Vagina (tissue), 2 donors: ENCODE measurements at regions of chr7 and their contacts with region 1.

Region 1: GRCh38 chr7:3897438-3898385 is 596.7 kb downstream of the SDK1 start:
- DNase-seq: no peak
- H3K4me3 ChIP-seq: no peak overlapping the region
- H3K27ac ChIP-seq: peak overlapping the region; percentile 18
- H3K4me1 ChIP-seq: no peaks in the 10 kb centered on the region
- H3K27me3 ChIP-seq: no peaks in the 10 kb centered on the region
- CTCF ChIP-seq: peak; percentile 18 to 72 (median 60)
- POLR2A ChIP-seq: no peak

Region 2: DNA sequence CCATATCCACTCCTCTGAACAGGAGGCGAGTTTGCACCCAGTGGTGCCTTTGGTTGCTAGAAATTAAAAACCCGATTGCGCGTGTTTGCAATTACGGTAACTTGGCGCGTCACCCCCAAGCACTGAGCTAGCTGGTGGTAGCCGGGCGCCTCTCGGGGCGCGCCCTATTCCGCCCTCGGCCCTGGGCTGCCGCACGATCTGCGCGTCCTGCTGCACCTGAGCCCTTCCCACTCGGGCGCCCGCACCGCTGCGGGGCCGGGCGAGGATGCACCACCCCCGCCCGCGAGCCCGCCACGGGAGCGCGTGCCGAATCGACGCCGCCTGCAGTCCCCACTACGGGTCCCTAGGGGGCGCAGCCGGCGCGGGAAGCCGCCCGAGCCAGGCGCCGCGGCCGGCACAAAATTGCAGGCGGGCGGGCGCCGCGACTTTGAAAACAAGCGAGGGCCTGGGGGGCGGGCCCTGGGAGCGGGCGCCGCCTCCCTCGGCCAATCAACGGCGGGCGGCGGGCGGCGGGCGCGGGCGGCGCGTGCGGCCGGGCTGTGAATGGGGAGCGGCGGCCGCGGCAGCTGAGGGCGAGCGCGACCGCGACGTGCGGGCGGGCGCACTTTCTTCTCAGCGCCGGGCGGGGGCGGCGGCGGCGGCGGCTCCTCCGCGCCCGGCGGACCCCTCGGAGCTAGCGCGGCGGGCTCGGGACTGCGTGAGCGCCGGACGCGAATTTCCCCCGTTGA is 596.9 kb before region 1 on chr7 and contains the start of gene SDK1:
- intact Hi-C with region 1: loop called (anchors 10 kb)
- DNase-seq: no peak
- H3K4me3 ChIP-seq: peak within 1 kb of the TSS; percentile 62 to 70
- H3K27ac ChIP-seq: peak within 1 kb of the TSS; percentile 79
- H3K4me1 ChIP-seq: peaks cover 12% of the 10 kb centered on the region
- H3K27me3 ChIP-seq: no peaks in the 10 kb centered on the region
- CTCF ChIP-seq: peak; percentile 76 to 95 (median 89)
- POLR2A ChIP-seq: peak in 1 of 2 donors; percentile 46
- total RNA-seq, gene SDK1: 16.7 TPM

Region 3: DNA sequence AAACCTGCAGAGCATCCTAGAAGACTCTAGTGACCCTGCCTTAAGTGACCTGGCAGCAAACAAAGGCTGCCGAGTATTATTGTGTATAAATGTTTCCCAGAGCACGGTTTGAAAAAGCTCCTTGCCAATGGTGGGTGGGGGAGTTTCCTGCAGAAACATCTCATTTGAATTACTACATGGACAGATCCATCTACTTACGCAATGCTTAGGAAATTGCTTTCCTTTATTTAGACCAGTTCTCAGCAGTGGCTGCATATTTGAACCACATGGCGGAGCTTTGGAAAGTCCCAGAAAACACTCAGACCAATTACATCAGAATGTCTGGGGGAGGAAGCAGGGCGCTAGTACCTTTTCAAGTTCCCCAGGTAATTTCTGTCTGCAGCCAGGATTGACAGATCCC is 35.8 kb before region 1 on chr7:
- intact Hi-C with region 1: no loop called
- DNase-seq: peak in 1 of 2 donors; percentile 92
- H3K4me3 ChIP-seq: no peak overlapping the region
- H3K27ac ChIP-seq: peak overlapping the region; percentile 72
- H3K4me1 ChIP-seq: peaks cover 23% of the 10 kb centered on the region
- H3K27me3 ChIP-seq: no peaks in the 10 kb centered on the region
- CTCF ChIP-seq: no peak
- POLR2A ChIP-seq: no peak